GM10248 (cell line): ENCODE measurements at regions of chr15 and their contacts with region 1.

Region 1: GRCh38 chr15:41557673-41558399 is 1.2 kb upstream of the TYRO3 start:
- DNase-seq: peak; percentile 75
- CTCF ChIP-seq: peak; percentile 81

Region 2: DNA sequence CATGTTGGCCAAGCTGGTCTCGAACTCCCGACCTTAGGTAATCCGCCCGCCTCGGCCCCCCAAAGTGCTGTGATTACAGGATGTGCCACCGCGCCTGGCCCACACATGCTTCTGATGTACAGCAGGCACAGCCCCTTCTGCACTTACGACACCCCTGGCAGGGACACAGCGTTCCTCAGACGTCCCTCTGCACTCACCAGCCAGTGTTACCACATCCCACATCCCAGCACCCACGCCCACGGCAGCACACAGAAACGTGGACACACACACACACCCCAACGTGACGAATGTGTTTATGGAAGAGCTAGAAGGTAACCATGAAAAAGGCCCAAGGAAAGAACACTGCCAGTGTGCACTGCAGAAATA is 13.2 kb before region 1 on chr15:
- CTCF ChIA-PET with region 1: interaction called, 35 read pairs
- POLR2A ChIA-PET with region 1: no interaction called
- DNase-seq: no peak
- CTCF ChIP-seq: no peak

Region 3: GRCh38 chr15:42080585-42081462 is 523.0 kb after region 1 on chr15:
- CTCF ChIA-PET with region 1: no interaction called
- POLR2A ChIA-PET with region 1: no interaction called
- DNase-seq: no peak
- CTCF ChIP-seq: no peak